ENCODE measurements at regions of chr19 and their contacts with region 1.

Region 1: GRCh38 chr19:10565567-10566407 is at the start of gene KRI1:
- DNase-seq: peak; percentile 99
- ATAC-seq: peak; percentile 64
- H3K4me3 Mint-ChIP-seq: peak within 1 kb of the TSS; percentile 95
- H3K27ac Mint-ChIP-seq: peak within 1 kb of the TSS; percentile 98
- H3K4me1 Mint-ChIP-seq: peaks cover 46% of the 10 kb centered on the region
- H3K27me3 Mint-ChIP-seq: no peaks in the 10 kb centered on the region
- CTCF ChIP-seq: no peak
- total RNA-seq, gene KRI1: 44.7 and 48.1 TPM in 2 replicates

Region 2: GRCh38 chr19:10230861-10231611 is 334.8 kb before region 1 on chr19 and contains the start of gene S1PR2:
- CTCF ChIA-PET with region 1: no interaction called
- POLR2A ChIA-PET with region 1: no interaction called
- intact Hi-C with region 1: loop called (anchors 10 kb)
- DNase-seq: peak; percentile 64
- ATAC-seq: peak; percentile 25
- H3K4me3 Mint-ChIP-seq: peak within 1 kb of the TSS; percentile 84
- H3K27ac Mint-ChIP-seq: peak within 1 kb of the TSS; percentile 46
- H3K4me1 Mint-ChIP-seq: peaks cover 46% of the 10 kb centered on the region
- H3K27me3 Mint-ChIP-seq: no peaks in the 10 kb centered on the region
- CTCF ChIP-seq: no peak
- total RNA-seq, gene S1PR2: 5.3 and 5.6 TPM in 2 replicates

Region 3: DNA sequence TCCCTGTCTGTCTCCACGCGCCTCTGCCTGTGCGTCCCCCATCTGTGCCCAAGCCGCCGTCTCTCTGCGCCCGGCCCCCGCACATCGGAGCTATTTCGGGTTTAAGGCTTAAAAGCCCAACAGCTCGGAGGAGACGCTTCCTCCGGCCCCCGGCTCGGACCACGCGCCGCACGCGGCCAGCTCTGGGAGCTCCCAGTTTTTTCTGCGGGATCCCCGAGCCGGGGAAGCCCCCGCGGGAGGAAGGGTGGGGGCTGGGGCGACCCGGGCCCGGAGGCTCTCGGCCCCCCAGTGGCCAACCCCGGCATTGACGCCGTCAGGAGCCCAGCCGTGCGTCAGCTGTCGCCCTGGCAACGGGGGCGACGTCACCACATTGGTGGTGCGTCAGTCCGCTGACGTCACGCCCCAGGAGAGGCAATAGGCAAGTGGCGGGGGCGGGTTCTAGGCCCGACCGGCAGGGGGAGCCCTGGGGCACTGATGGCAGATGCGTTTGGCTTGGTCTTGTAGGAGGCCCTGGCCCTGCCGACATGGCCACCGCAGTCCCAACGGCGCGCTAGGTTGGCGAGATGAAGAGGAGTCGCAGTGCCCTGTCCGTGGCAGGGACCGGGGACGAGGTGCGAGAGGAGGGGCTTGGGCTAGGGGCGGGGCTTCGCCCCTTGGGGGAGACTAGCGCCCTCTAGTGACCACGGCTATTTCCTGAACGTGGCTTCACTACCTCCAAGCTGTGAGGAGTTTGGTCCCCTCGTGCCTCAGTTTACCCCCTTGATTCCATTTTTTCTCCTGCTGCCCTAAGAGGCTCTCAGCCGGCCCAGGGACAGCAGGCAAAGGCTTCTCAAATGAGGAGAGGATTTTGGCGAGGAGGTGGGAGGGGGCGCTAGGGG is 149.2 kb before region 1 on chr19:
- CTCF ChIA-PET with region 1: no interaction called
- POLR2A ChIA-PET with region 1: no interaction called
- intact Hi-C with region 1: loop called (anchors 5 kb)
- DNase-seq: peak; percentile 97
- ATAC-seq: peak; percentile 68
- H3K4me3 Mint-ChIP-seq: peak overlapping the region; percentile 78
- H3K27ac Mint-ChIP-seq: peak overlapping the region; percentile 80
- H3K4me1 Mint-ChIP-seq: peaks cover 70% of the 10 kb centered on the region
- H3K27me3 Mint-ChIP-seq: peaks cover 29% of the 10 kb centered on the region
- CTCF ChIP-seq: peak; percentile 79

Region 4: DNA sequence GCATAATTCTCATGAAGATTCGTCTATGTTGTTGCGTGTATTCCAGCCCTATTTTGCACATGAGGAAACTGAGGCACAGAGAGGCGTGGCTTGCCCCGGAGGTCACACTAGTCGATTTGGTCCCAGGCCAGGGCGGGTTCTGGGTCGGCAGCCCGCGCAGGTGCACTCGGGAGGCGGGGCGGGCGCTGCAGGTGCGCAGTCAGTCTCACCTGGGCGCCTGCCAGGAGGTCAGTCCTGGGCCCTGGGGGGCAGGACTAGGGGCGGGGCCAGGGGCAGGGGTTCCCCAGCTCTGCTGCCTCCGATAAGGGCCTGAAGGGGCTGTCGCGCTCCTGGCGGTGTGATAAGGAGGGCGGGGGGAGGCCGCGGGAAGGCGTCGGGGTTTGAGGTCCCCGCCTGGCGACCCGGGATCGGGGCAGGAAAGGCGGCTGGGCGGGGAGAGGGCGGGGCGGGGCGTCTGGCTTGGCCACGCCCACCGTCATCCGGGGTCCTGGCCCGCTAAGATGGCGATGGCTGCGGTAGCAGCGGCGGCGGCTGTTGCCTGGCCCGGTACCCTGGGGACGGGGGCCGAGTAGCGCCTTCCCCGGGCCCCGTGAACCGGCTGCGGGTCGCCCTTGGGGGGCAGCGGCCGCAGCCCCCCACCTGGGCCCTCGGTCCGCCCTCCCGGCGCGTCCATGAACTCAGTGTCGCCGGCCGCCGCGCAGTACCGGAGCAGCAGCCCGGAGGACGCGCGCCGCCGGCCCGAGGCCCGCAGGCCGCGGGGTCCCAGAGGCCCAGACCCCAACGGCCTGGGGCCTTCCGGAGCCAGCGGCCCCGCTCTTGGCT is 22.2 kb before region 1 on chr19 and contains the start of gene ATG4D:
- CTCF ChIA-PET with region 1: interaction called, 16 read pairs
- POLR2A ChIA-PET with region 1: interaction called, 7 read pairs
- intact Hi-C with region 1: loop called (anchors 1 kb)
- DNase-seq: peak; percentile 79
- ATAC-seq: peak; percentile 88
- H3K4me3 Mint-ChIP-seq: peak within 1 kb of the TSS; percentile 86
- H3K27ac Mint-ChIP-seq: peak within 1 kb of the TSS; percentile 72
- H3K4me1 Mint-ChIP-seq: peaks cover 18% of the 10 kb centered on the region
- H3K27me3 Mint-ChIP-seq: peaks cover 9% of the 10 kb centered on the region
- CTCF ChIP-seq: no peak
- total RNA-seq, gene ATG4D: 37.8 and 39.1 TPM in 2 replicates

Region 5: GRCh38 chr19:10644260-10645007 is 78.6 kb after region 1 on chr19:
- CTCF ChIA-PET with region 1: interaction called, 4 read pairs
- POLR2A ChIA-PET with region 1: interaction called, 10 read pairs
- intact Hi-C with region 1: no loop called
- DNase-seq: peak; percentile 80
- ATAC-seq: peak; percentile 82
- H3K4me3 Mint-ChIP-seq: no peak overlapping the region
- H3K27ac Mint-ChIP-seq: peak overlapping the region; percentile 84
- H3K4me1 Mint-ChIP-seq: peaks cover 23% of the 10 kb centered on the region
- H3K27me3 Mint-ChIP-seq: no peaks in the 10 kb centered on the region
- CTCF ChIP-seq: peak; percentile 66

Region 6: GRCh38 chr19:10870955-10871603 is 305.3 kb after region 1 on chr19 and contains the start of gene CARM1:
- CTCF ChIA-PET with region 1: no interaction called
- POLR2A ChIA-PET with region 1: no interaction called
- intact Hi-C with region 1: loop called (anchors 10 kb)
- DNase-seq: peak; percentile 100
- ATAC-seq: peak; percentile 84
- H3K4me3 Mint-ChIP-seq: peak within 1 kb of the TSS; percentile 83
- H3K27ac Mint-ChIP-seq: peak within 1 kb of the TSS; percentile 88
- H3K4me1 Mint-ChIP-seq: peaks cover 44% of the 10 kb centered on the region
- H3K27me3 Mint-ChIP-seq: no peaks in the 10 kb centered on the region
- CTCF ChIP-seq: no peak
- total RNA-seq, gene CARM1: 32.3 and 39.1 TPM in 2 replicates